Activated CD4-positive, alpha-beta memory T cell treated with anti-CD3 and anti-CD28 coated beads for 36 hours (primary cell): ENCODE measurements at regions of chr16 and their contacts with region 1.

Region 1: GRCh38 chr16:14249291-14250032 is 178.3 kb downstream of the MRTFB start:
- DNase-seq: peak; percentile 62
- H3K4me3 Mint-ChIP-seq: no peak overlapping the region
- H3K27ac Mint-ChIP-seq: no peak overlapping the region
- H3K4me1 Mint-ChIP-seq: peaks cover 3% of the 10 kb centered on the region
- H3K27me3 Mint-ChIP-seq: no peaks in the 10 kb centered on the region

Region 2: DNA sequence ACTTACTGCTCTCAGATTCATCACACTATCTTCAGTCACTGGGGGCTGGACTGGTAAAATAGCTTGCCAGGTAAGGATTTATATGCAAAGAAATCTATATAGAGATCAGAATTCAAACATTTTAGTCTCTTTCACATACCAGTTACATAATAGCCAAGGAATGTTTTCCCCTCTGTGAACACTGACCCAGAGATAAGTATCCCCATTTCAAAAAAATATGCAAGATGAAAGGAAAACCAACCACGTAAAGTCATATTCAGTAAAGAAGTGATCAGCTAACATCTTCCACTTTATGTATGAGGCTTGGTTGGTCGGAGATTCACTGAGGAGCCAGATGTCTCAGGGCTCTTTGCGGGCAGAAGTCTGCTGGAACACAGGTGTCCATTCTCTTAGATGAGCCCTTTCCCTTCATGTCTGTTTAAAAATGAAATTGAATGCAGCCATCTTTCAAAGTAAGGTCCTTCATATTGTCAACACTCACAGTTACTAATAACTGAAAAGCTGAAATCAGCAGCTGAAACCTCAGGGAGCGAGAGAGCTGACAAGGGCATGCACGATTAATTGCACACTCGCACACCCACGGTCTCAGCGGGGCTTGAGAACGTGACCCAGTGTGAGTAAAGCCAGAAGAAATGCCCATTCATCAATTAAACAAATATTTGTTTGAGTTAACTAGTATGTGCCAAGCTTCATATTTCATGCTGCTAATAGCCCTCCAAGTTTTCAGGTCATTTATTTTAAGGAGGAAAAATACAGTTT is 17.2 kb before region 1 on chr16:
- CTCF ChIA-PET with region 1: no interaction called
- POLR2A ChIA-PET with region 1: no interaction called
- intact Hi-C with region 1: no loop called
- DNase-seq: no peak
- H3K4me3 Mint-ChIP-seq: no peak overlapping the region
- H3K27ac Mint-ChIP-seq: no peak overlapping the region
- H3K4me1 Mint-ChIP-seq: no peaks in the 10 kb centered on the region
- H3K27me3 Mint-ChIP-seq: no peaks in the 10 kb centered on the region

Region 3: DNA sequence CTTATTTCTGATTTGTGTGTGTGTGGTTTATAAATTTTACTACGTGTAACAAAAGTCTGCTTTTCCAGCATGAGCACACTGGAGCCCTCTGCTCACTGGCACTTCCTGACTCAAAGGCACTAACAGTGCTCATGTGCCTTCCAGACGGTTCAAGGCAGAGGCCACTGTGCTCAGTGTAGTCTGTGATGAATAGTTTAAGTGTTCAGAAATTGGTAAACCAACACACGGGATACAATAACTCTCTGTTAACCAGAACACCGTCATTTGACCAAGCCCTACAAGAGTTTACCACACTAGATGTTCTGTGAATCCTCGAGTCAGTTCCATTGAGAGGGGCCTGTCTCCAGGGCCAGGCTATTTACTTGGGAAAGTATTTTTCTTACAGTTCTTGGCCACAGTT is 13.5 kb after region 1 on chr16:
- CTCF ChIA-PET with region 1: interaction called, 14 read pairs
- POLR2A ChIA-PET with region 1: no interaction called
- intact Hi-C with region 1: no loop called
- DNase-seq: no peak
- H3K4me3 Mint-ChIP-seq: no peak overlapping the region
- H3K27ac Mint-ChIP-seq: no peak overlapping the region
- H3K4me1 Mint-ChIP-seq: no peaks in the 10 kb centered on the region
- H3K27me3 Mint-ChIP-seq: no peaks in the 10 kb centered on the region

Region 4: DNA sequence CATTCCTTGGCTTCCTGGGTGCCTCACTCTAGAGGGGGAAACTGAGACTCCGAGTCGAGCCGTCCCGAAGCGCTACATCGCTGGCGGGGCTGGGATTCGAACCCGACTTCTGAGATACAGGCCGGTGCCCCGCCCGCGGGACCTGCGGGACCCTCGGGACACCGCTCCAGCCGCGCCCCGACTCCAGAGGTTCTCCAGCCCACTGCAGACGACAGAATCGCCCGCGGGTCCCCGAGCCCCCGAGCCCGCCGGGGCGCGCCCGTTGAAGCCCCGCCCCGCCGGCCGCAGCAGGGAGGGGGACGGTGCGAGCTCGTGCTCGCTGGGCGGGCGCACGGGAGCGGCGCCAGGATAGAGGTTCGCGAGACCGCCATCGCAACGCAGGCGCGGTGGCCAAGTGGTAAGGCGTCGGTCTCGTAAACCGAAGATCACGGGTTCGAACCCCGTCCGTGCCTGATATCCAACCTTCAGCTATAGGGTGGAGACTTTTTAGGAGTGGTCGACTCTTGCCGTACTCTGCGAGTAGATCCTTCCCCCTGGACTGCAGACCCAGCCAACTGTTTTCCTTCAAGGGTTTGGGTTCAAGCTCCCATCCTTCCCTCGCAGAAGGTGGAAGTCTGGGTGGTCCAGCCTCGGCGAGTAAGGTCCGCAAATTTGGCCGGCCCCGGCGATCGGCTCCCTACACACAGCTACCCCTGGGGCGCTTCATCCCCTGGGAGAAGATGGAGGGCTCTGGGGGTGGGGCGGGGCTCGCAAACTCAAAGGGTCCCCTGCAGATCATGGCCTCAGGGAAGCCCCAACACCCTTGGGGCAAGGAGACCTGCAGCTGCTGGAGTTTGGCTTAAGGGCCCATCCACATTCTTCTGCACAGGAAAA is 36.3 kb after region 1 on chr16:
- CTCF ChIA-PET with region 1: interaction called, 14 read pairs
- POLR2A ChIA-PET with region 1: no interaction called
- intact Hi-C with region 1: no loop called
- DNase-seq: peak; percentile 96
- H3K4me3 Mint-ChIP-seq: peak overlapping the region; percentile 85
- H3K27ac Mint-ChIP-seq: peak overlapping the region; percentile 77
- H3K4me1 Mint-ChIP-seq: peaks cover 13% of the 10 kb centered on the region
- H3K27me3 Mint-ChIP-seq: no peaks in the 10 kb centered on the region

Region 5: DNA sequence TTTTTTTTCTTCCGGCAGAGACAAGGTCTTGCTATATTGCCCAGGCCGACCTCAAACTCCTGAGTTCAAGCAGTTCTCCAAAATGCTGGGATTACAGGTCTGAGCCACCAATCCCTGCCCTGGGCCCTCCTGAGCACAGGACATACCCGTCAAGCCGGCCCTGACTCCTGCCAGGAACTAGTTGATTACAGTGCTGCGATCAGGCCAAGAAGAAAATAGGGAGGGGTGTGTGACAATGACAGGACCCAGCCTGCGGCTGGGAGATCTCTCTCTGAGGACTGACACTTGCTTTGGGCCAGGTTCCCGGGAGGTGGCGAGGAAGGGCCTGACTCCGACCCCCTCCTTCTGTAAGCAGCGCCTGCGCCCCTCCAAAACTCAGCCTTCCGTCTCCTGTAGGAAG is 98.2 kb after region 1 on chr16:
- CTCF ChIA-PET with region 1: no interaction called
- POLR2A ChIA-PET with region 1: no interaction called
- intact Hi-C with region 1: no loop called
- DNase-seq: no peak
- H3K4me3 Mint-ChIP-seq: no peak overlapping the region
- H3K27ac Mint-ChIP-seq: no peak overlapping the region
- H3K4me1 Mint-ChIP-seq: no peaks in the 10 kb centered on the region
- H3K27me3 Mint-ChIP-seq: peaks cover 10% of the 10 kb centered on the region

Region 6: GRCh38 chr16:14436401-14436955 is 187.0 kb after region 1 on chr16:
- CTCF ChIA-PET with region 1: no interaction called
- POLR2A ChIA-PET with region 1: no interaction called
- intact Hi-C with region 1: no loop called
- DNase-seq: no peak
- H3K4me3 Mint-ChIP-seq: no peak overlapping the region
- H3K27ac Mint-ChIP-seq: no peak overlapping the region
- H3K4me1 Mint-ChIP-seq: peaks cover 7% of the 10 kb centered on the region
- H3K27me3 Mint-ChIP-seq: no peaks in the 10 kb centered on the region

Region 7: GRCh38 chr16:14529010-14529669 is 279.7 kb after region 1 on chr16:
- CTCF ChIA-PET with region 1: interaction called, 15 read pairs
- POLR2A ChIA-PET with region 1: no interaction called
- intact Hi-C with region 1: loop called (anchors 2 kb)
- DNase-seq: peak; percentile 64
- H3K4me3 Mint-ChIP-seq: no peak overlapping the region
- H3K27ac Mint-ChIP-seq: no peak overlapping the region
- H3K4me1 Mint-ChIP-seq: no peaks in the 10 kb centered on the region
- H3K27me3 Mint-ChIP-seq: no peaks in the 10 kb centered on the region